Calu3 (cell line): ENCODE measurements at regions of chrX and their contacts with region 1.

Region 1: DNA sequence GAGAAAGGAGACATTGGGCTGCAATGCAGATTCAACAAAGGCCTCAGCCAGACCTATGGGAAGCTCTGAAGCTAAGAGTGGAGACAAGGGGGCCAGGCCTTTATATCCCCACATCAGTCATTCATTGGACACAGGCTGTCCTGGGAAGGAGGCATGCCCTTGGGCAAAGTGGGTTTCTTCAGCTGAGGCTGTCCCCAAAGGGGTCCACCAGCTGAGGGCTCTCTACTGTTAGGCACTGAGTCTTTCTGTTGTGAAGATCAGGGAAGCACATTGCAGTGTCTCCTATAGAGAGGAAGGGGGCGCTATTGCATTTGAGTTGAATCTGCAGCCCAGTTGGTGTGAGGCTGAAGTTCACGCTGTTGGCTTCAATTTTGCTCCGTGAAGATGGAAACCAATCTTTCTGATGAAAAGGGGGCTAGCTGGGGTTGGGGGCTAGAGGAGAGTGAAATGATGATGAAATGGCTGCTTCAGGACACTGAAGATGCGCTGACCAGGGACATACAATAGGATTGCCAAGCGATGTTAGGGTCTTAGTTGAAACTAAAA is 48.0 kb downstream of the SLC25A5 start:
- DNase-seq: peak; percentile 28
- H3K4me3 Mint-ChIP-seq: no peak overlapping the region
- H3K27ac Mint-ChIP-seq: no peak overlapping the region
- H3K4me1 Mint-ChIP-seq: no peaks in the 10 kb centered on the region
- H3K27me3 Mint-ChIP-seq: no peaks in the 10 kb centered on the region
- CTCF ChIP-seq: peak; percentile 64

Region 2: DNA sequence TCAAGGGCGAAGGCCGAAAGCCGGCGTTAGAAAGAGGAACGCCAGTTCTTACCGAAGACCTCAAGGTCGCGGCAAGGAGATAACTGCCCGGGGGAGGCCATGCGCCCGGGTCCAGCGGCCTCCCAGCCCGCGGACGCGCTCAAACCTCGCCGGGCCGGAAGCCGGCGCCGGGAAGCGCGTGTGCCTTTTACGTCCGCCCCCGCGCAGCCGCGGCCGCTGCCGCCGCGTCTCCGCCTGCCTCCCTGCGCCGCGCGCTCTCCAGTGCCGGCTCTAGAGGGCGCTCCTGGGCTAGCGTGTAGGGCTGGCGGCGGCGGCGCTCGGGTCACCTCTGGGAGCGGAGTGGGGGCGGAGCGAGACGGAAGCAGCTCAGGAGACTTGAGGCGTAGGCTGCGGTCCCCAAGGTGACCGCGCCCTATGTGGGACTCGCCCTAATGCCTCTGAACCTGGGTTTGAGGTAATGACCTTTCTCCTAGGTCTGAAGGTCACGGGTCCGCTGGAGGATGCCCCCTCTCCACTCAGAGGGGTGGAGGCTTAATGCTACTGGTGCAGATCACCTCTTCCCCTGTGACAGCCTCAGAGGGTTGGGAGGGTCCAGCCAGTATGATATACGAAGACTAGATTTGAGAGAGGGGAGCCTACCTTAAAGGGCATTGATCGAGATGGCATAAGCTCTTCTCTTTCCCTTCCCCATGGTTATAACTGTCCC is 47.1 kb before region 1 on chrX:
- CTCF ChIA-PET with region 1: interaction called, 16 read pairs
- intact Hi-C with region 1: no loop called
- DNase-seq: peak; percentile 93
- H3K4me3 Mint-ChIP-seq: peak overlapping the region; percentile 100
- H3K27ac Mint-ChIP-seq: peak overlapping the region; percentile 84
- H3K4me1 Mint-ChIP-seq: no peaks in the 10 kb centered on the region
- H3K27me3 Mint-ChIP-seq: no peaks in the 10 kb centered on the region
- CTCF ChIP-seq: peak; percentile 66

Region 3: GRCh38 chrX:119488749-119489148 is 27.5 kb before region 1 on chrX:
- CTCF ChIA-PET with region 1: interaction called, 32 read pairs
- intact Hi-C with region 1: loop called (anchors 1 kb)
- DNase-seq: peak; percentile 69
- H3K4me3 Mint-ChIP-seq: no peak overlapping the region
- H3K27ac Mint-ChIP-seq: no peak overlapping the region
- H3K4me1 Mint-ChIP-seq: no peaks in the 10 kb centered on the region
- H3K27me3 Mint-ChIP-seq: no peaks in the 10 kb centered on the region
- CTCF ChIP-seq: peak; percentile 52

Region 4: DNA sequence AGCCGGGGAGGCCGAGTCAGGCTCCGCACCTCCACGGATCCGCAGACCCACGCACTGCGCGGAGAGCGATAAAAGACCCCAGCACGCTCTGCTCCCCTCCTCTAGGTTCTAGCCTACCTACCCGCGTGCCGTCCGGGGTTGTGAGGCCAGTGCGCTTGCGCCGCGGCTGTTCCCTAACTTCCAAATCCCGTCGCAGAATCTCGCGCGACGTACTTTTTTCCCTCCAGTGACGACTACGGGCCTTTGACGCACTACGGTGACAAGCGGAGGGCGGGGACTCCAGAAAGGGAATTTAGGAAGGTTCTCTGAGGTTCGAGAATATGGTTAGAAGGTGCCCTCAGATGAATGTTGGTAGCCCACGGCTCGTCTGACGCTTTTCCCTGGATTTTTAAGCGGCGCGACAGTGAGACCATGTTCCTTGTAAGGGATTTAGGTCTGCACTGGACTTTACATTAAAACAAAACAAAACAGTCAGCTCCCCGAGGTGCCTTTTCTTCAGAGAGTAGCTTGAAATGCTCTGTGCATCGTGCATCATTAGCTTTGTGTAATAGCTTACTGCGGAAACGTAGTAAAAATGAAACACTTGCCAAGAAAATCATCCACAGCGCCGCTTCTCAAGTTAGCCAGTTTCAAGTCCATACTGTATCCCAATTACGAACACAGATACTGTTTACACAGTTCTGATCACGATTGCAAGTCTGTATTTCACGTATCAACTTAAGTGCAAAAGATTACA is 90.2 kb after region 1 on chrX and contains the start of gene NKRF:
- CTCF ChIA-PET with region 1: no interaction called
- intact Hi-C with region 1: loop called (anchors 5 kb)
- DNase-seq: peak; percentile 89
- H3K4me3 Mint-ChIP-seq: peak within 1 kb of the TSS; percentile 90
- H3K27ac Mint-ChIP-seq: peak within 1 kb of the TSS; percentile 90
- H3K4me1 Mint-ChIP-seq: peaks cover 16% of the 10 kb centered on the region
- H3K27me3 Mint-ChIP-seq: no peaks in the 10 kb centered on the region
- CTCF ChIP-seq: no peak
- total RNA-seq, gene NKRF: 17.8 and 18.0 TPM in 2 replicates

Region 5: DNA sequence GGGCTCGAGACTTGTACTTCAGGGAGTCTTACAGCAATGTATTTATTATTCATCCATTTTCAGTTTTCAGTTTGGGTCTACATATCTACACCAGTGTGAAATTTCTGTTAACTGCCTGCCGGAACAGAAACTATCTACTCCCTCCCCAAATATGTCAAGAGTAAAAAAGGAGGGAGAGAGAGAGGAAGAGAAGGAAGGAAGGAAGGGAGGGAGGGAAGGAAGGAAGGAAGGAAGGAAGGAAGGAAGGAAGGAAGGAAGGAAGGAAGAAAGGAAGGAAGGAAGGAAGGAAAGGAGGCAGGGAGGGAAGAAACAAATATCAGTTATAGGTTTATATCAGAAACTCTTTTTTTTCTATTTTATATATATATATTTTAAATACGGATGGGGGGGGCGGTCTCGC is 262.6 kb after region 1 on chrX:
- CTCF ChIA-PET with region 1: no interaction called
- intact Hi-C with region 1: loop called (anchors 2 kb)
- DNase-seq: no peak
- H3K4me3 Mint-ChIP-seq: no peak overlapping the region
- H3K27ac Mint-ChIP-seq: no peak overlapping the region
- H3K4me1 Mint-ChIP-seq: no peaks in the 10 kb centered on the region
- H3K27me3 Mint-ChIP-seq: no peaks in the 10 kb centered on the region
- CTCF ChIP-seq: no peak